PC-9 (cell line): ENCODE measurements at regions of chr5 and their contacts with region 1.

Region 1: DNA sequence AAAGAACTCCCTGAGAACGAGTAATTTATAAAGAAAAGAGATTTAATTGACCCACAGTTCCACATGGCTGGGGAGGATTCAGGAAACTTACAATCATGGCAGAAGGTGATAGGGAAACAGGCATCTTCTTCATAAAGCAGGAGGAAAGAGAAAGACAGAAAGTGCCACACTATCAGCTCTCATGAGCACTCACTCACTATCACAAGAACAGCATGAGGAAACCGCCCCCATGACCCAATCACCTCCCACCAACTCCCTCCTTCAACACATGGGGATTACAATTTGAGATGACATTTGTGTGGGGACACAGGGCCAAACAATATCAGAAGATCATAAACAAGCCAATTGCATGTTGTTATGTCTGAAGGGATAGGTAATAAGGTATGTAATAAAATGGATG is 935.9 kb upstream of the COX7C start:
- DNase-seq: no peak
- H3K4me3 ChIP-seq: no peak overlapping the region
- H3K27ac ChIP-seq: no peak overlapping the region
- H3K4me1 ChIP-seq: no peaks in the 10 kb centered on the region
- H3K27me3 ChIP-seq: no peaks in the 10 kb centered on the region
- CTCF ChIP-seq: no peak

Region 2: DNA sequence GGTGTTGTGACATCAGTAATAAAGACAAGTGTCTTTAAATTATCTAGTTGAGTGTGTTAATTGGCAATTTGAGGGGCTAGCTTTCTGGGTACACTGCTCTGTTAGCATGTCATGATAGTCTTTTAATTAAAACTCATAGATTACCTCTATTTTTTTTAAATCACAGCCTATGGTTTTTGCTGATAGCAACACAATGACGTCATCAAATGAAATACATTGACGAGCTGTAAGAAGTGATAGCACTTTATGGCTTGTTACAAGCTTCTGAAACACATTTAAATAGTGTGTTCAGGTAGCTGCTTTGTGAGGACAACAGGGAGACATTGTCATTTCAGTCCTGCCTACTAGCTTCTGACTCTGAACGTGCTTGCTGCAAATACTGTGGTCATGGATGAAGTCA is 696.7 kb before region 1 on chr5:
- CTCF ChIA-PET with region 1: no interaction called
- POLR2A ChIA-PET with region 1: interaction called, 15 read pairs
- intact Hi-C with region 1: no loop called
- DNase-seq: no peak
- H3K4me3 ChIP-seq: no peak overlapping the region
- H3K27ac ChIP-seq: no peak overlapping the region
- H3K4me1 ChIP-seq: no peaks in the 10 kb centered on the region
- H3K27me3 ChIP-seq: no peaks in the 10 kb centered on the region
- CTCF ChIP-seq: no peak